BJ (cell line): ENCODE measurements at regions of chr10 and their contacts with region 1.

Region 1: DNA sequence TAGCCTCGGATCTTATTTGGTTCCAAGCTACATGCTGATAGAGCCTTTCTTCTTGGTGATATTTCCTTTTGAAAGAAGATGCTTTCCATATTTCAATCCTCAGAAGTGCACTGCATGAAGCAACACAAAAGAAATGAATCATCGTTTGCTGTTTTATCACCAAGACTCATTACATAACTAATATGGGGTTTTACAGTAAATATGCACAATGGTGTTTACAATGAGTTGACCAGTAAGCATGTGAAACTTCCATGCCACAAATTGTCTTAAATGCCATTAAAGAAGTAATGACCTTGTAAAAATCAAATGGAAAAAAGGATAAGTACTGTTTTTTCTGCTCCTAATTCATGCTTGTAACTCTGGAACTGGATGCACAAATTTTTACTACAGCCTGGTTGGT is 1017.0 kb upstream of the GHITM start:
- DNase-seq: peak; percentile 89
- H3K4me3 ChIP-seq: no peak overlapping the region
- H3K27me3 ChIP-seq: no peaks in the 10 kb centered on the region
- CTCF ChIP-seq: no peak

Region 2: GRCh38 chr10:82826132-82826531 is 296.2 kb before region 1 on chr10:
- CTCF ChIA-PET with region 1: no interaction called
- POLR2A ChIA-PET with region 1: interaction called, 14 read pairs
- DNase-seq: peak; percentile 87
- H3K4me3 ChIP-seq: no peak overlapping the region
- H3K27me3 ChIP-seq: no peaks in the 10 kb centered on the region
- CTCF ChIP-seq: no peak

Region 3: DNA sequence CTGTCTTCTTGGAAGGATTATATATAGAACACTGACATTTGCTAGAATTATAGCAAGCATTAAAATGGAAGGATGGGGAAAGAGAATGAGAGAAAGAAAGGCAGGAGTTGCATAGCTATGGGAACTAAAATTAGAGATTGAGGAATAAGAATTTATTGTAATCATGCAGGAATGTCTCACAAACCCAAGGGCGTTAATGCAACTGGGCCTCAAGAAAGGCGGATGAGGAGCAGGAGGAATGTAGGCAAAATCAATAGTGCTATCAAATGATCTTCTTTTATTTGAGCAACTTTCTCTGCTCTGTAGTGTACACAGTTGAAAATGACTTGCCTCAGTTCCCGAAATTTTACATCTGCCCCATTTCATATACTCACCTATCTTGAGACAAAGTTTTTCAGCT is 114.8 kb before region 1 on chr10:
- CTCF ChIA-PET with region 1: no interaction called
- POLR2A ChIA-PET with region 1: no interaction called
- DNase-seq: no peak
- H3K4me3 ChIP-seq: no peak overlapping the region
- H3K27me3 ChIP-seq: no peaks in the 10 kb centered on the region
- CTCF ChIP-seq: no peak